ENCODE measurements at regions of chr7 and their contacts with region 1.

Region 1: GRCh38 chr7:156460858-156461627 is 179.5 kb upstream of the RNF32 start:
- DNase-seq: no peak
- ATAC-seq: no peak
- H3K4me3 ChIP-seq: no peak overlapping the region
- H3K27ac ChIP-seq: no peak overlapping the region
- H3K4me1 ChIP-seq: no peaks in the 10 kb centered on the region
- H3K27me3 ChIP-seq: peaks cover 0 to 40% (median 3%) of the 10 kb centered on the region in 9 donors
- CTCF ChIP-seq: no peak
- POLR2A ChIP-seq: no peak

Region 2: DNA sequence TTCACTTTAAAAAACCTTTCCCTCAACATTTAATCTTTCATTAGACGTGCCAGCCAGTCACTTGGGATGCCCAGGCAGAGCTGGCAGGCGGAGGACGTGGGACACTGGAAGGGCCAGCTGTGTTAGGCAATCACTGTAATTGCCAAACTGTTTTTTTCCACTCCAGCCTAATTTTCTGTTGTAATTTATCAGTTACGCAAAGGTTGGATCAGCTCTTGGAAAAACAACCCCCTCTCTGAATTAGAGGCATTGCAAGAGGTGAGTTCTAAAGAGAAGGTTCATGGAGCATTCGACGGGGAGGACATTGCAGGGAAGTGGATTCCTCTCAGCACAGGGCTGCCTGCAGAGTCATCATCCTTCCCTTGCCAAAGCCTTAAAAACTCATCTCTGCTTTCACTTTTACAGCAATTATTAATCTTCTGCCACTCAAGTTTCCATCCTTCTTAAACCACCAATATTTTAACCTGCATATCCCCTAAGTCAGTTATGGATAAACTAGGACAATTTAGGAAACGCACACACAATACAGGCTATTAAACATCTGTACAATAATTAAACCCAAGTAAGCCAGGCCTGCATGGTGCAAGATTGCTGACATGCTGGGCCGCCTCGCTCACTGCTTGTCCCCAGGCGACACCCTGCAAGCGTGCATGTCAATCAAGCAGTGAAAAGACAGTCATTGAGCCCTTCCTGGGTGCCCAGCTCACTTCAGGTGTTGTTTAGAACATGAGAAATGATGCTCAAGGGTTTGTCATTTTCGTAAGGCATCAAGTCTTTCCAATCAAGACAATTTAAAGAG is 92.8 kb before region 1 on chr7:
- intact Hi-C with region 1: no loop called
- DNase-seq: no peak
- ATAC-seq: no peak
- H3K4me3 ChIP-seq: no peak overlapping the region
- H3K27ac ChIP-seq: no peak overlapping the region
- H3K4me1 ChIP-seq: no peaks in the 10 kb centered on the region
- H3K27me3 ChIP-seq: no peaks in the 10 kb centered on the region
- CTCF ChIP-seq: no peak
- POLR2A ChIP-seq: no peak

Region 3: DNA sequence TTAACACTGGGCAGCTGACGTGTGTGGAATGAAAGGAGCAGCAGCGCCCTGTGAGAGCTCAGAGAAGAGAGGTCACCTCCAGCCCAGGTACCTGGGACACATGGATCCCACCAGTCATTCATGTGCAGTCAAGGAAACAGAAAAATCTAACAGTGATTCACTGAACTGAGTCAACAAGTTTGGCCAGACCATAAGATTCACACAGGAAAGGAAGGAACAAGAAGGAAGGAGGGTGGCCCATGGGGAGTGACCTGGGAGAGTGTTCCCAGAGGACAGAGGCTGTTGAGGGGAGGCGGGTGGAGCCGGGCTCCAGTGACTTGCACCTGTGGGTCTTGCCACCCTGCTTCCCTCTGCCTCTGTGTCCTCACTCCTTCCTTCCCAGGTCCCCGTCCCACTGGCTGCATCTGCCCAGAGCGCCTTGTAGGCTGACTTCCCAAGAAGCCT is 207.2 kb after region 1 on chr7:
- intact Hi-C with region 1: loop called in 1 of 10 experiments (anchors 10 kb)
- DNase-seq: no peak
- ATAC-seq: no peak
- H3K4me3 ChIP-seq: no peak overlapping the region
- H3K27ac ChIP-seq: no peak overlapping the region
- H3K4me1 ChIP-seq: no peaks in the 10 kb centered on the region
- H3K27me3 ChIP-seq: no peaks in the 10 kb centered on the region
- CTCF ChIP-seq: no peak
- POLR2A ChIP-seq: no peak